GM10248 (cell line): ENCODE measurements at regions of chr13 and their contacts with region 1.

Region 1: GRCh38 chr13:52809310-52809769 is 39.1 kb downstream of the PCDH8 start:
- DNase-seq: peak; percentile 79
- CTCF ChIP-seq: peak; percentile 62

Region 2: DNA sequence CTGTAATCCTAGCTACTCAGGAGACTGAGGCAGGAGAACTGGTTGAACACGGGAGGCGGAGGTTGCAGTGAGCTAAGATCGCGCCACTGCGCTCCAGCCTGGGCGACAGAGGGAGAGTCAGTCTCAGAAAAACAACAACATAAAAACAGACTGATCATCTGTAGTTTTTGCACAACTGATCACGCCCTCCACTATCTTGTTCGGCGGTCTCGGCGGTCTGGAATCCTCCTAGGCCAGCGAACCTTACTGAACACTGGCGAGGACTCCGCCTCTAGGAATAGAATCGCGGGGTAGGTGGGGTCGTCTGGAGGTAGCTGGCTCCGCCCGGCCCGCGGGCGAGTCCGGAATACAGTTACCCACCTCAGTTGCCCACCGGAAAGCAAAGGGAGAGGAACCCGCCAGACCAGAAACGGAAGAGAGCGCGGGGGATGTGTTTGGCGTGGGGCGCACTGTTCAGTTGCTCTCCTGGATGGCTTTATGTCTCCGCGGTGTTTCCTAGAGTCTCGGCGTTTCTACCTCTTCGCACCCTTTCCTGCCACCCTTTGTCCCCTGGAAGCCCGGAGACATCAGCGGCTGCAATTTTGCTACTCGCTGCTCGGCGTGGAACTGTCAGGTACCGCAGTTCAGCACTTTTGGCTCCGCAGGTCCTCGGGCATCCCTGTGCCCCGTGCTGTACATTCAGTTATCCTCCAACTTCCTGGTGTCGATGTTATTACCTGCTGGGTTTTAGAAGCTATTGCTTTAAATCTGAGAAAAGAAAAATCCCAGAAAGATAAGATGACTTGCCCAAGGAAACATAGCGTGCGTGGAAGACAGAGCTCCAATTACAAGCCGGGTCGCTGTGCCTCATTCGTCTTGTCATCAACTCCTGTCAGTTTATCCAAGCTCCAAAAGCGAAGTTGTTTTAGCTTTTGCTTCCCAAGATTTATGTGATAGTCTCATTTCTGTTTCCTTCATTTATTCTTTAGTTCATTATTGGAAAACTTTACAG is 192.0 kb before region 1 on chr13:
- CTCF ChIA-PET with region 1: interaction called, 13 read pairs
- POLR2A ChIA-PET with region 1: no interaction called
- DNase-seq: peak; percentile 86
- CTCF ChIP-seq: no peak

Region 3: GRCh38 chr13:52665325-52665724 is 144.0 kb before region 1 on chr13:
- CTCF ChIA-PET with region 1: interaction called, 34 read pairs
- POLR2A ChIA-PET with region 1: no interaction called
- DNase-seq: peak; percentile 20
- CTCF ChIP-seq: peak; percentile 37

Region 4: DNA sequence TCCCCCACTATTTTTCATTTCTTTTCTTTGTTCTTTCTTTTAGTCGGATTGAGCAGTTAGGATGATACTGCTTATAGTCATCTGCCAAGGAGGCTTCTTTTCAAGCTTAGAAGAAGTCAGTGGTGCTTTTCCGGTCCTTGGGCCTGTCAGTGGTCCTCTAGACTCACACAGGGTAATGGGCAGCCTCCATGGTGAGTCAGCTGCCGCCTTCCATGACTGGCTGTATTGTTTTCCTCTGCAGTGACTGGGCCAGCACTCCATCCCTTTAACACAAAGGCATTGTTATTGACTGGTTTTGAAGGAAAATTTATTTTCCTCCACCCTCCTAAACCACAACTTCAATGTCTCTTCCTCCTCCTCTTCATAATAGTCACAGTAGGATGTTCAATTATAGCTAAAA is 22.6 kb before region 1 on chr13:
- CTCF ChIA-PET with region 1: interaction called, 13 read pairs
- POLR2A ChIA-PET with region 1: no interaction called
- DNase-seq: no peak
- CTCF ChIP-seq: no peak

Region 5: DNA sequence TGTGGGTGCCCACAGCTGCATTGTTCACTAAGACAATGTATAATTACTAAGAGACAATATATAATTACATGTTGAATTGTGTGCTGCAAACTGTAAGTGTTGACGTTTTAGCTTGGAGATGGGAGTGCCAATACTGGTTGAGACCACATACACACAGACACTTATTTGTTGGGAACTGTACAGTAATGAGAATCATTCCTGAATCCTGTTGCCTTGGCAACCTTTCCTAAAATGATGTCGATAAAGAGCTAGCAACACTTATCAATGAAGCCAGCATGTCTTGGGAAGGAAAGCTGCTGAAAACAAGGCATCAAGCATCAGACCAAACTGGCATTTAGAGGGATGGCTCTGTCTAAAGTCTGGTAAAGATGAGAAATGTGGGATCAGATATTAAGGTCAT is 12.2 kb before region 1 on chr13:
- CTCF ChIA-PET with region 1: interaction called, 24 read pairs
- POLR2A ChIA-PET with region 1: no interaction called
- DNase-seq: no peak
- CTCF ChIP-seq: no peak

Region 6: DNA sequence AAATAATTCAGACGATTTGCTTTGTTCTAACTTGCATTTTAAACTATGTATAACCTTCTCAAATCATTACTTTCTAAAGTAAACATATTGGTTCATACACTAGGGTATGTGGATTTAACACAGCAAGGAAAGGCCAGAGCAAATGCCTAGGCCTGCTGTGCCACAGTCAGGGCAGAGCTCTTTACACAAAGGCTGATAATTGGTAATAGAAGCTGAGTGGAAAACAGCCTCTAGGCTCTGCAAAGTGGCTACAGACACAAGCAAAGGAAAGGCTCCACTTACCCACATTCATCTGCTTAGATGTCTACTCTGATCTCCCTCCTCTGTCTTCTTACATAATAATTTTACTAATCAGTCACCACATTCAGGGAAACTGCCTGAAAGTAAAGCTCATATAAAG is 602.1 kb after region 1 on chr13:
- CTCF ChIA-PET with region 1: no interaction called
- POLR2A ChIA-PET with region 1: no interaction called
- DNase-seq: no peak
- CTCF ChIP-seq: no peak